ENCODE measurements at regions of chr12 and their contacts with region 1.

Region 1: GRCh38 chr12:106919910-106920544 is 35.7 kb upstream of the TMEM263 start:
- DNase-seq: peak; percentile 19
- ATAC-seq: no peak
- H3K4me3 Mint-ChIP-seq: no peak overlapping the region
- H3K27ac Mint-ChIP-seq: no peak overlapping the region
- H3K4me1 Mint-ChIP-seq: peaks cover 8% of the 10 kb centered on the region
- H3K27me3 Mint-ChIP-seq: peaks cover 6% of the 10 kb centered on the region
- CTCF ChIP-seq: peak; percentile 95

Region 2: DNA sequence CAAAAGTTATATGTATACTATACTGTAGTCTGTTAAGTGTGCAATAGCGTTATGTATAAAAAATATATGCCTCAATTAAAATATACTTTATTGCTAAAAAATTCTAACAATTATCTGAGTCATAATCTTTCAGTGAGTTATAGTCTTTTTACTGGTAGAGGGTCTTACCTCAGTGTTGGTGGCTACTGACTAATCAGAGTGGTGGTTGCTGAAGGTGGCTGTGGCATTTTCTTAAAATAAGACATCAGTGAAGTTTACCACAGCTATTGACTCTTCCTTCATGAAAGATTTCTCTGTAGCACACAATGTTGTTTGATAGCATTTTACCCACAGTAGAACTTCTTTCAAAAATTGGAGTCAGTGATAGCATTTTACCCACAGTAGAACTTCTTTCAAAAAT is 539.1 kb before region 1 on chr12:
- CTCF ChIA-PET with region 1: interaction called, 15 read pairs
- POLR2A ChIA-PET with region 1: no interaction called
- intact Hi-C with region 1: loop called (anchors 5 kb)
- DNase-seq: no peak
- ATAC-seq: no peak
- H3K4me3 Mint-ChIP-seq: no peak overlapping the region
- H3K27ac Mint-ChIP-seq: no peak overlapping the region
- H3K4me1 Mint-ChIP-seq: peaks cover 13% of the 10 kb centered on the region
- H3K27me3 Mint-ChIP-seq: no peaks in the 10 kb centered on the region
- CTCF ChIP-seq: no peak

Region 3: GRCh38 chr12:106386813-106387535 is 533.1 kb before region 1 on chr12:
- CTCF ChIA-PET with region 1: interaction called, 5 read pairs
- POLR2A ChIA-PET with region 1: no interaction called
- intact Hi-C with region 1: loop called (anchors 5 kb)
- DNase-seq: no peak
- ATAC-seq: no peak
- H3K4me3 Mint-ChIP-seq: no peak overlapping the region
- H3K27ac Mint-ChIP-seq: no peak overlapping the region
- H3K4me1 Mint-ChIP-seq: no peaks in the 10 kb centered on the region
- H3K27me3 Mint-ChIP-seq: no peaks in the 10 kb centered on the region
- CTCF ChIP-seq: no peak

Region 4: GRCh38 chr12:106682592-106683234 is 237.3 kb before region 1 on chr12:
- CTCF ChIA-PET with region 1: no interaction called
- POLR2A ChIA-PET with region 1: no interaction called
- intact Hi-C with region 1: loop called (anchors 5 kb)
- DNase-seq: no peak
- ATAC-seq: peak; percentile 42
- H3K4me3 Mint-ChIP-seq: no peak overlapping the region
- H3K27ac Mint-ChIP-seq: no peak overlapping the region
- H3K4me1 Mint-ChIP-seq: no peaks in the 10 kb centered on the region
- H3K27me3 Mint-ChIP-seq: no peaks in the 10 kb centered on the region
- CTCF ChIP-seq: no peak

Region 5: DNA sequence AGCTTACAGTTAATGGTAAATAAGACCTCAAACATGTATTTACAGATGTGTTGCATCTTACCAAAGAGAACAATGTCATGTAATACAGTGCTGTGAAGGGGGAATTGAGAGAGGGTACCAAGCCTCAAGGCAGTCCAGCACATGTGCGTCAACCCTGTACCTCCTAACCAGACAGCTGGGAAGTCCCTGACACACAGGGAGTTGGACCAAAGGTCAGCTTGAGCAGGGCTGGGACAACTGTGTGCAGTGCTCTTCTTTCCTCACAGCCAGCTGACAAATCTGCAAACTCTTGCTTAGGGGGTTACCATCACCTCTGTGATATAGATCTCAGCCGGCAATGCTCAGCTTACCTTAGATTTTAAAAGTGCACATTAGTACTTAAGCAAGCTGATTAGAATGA is 202.4 kb before region 1 on chr12:
- CTCF ChIA-PET with region 1: no interaction called
- POLR2A ChIA-PET with region 1: no interaction called
- intact Hi-C with region 1: no loop called
- DNase-seq: no peak
- ATAC-seq: no peak
- H3K4me3 Mint-ChIP-seq: no peak overlapping the region
- H3K27ac Mint-ChIP-seq: no peak overlapping the region
- H3K4me1 Mint-ChIP-seq: peaks cover 3% of the 10 kb centered on the region
- H3K27me3 Mint-ChIP-seq: no peaks in the 10 kb centered on the region
- CTCF ChIP-seq: no peak

Region 6: DNA sequence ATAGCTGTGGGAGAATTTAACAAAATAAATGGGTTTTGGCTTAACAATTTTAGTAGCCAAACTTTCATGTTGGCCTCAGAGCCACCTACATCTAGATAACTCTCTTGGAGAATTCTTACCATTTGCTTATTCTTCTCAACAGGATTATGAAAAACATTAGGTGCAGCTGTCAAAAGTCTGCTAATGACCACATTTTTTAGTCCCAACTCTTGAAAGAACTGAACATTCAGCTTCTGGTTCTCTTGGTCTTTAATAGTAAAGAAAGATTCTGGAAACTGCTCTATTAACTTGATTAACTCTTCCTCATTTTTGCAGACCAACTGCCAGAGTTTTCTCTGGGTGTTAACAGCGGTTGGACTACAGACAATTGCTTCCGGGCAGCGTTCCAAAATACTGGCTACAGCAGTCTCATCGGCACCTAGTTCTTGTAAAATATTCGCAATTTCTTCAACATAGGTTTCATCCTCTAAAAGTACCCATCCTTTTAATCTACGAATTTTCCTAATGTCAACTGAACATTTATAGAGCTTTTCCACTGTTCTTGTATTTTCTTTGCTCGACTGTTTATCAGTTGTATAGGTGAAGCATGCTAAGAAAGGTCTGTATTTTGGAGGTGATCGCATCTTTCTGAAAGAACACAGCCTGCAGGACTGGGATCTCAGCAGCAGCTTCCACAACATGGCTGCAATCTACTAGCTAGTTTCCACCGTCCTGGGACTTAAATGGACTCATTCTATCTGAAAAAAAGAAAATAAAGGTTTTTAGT is 58.2 kb after region 1 on chr12:
- CTCF ChIA-PET with region 1: no interaction called
- POLR2A ChIA-PET with region 1: no interaction called
- intact Hi-C with region 1: no loop called
- DNase-seq: no peak
- ATAC-seq: no peak
- H3K4me3 Mint-ChIP-seq: no peak overlapping the region
- H3K27ac Mint-ChIP-seq: no peak overlapping the region
- H3K4me1 Mint-ChIP-seq: peaks cover 27% of the 10 kb centered on the region
- H3K27me3 Mint-ChIP-seq: no peaks in the 10 kb centered on the region
- CTCF ChIP-seq: no peak

Region 7: GRCh38 chr12:107027636-107028053 is 107.6 kb after region 1 on chr12:
- CTCF ChIA-PET with region 1: no interaction called
- POLR2A ChIA-PET with region 1: no interaction called
- intact Hi-C with region 1: no loop called
- DNase-seq: no peak
- ATAC-seq: peak; percentile 84
- H3K4me3 Mint-ChIP-seq: no peak overlapping the region
- H3K27ac Mint-ChIP-seq: peak overlapping the region; percentile 81
- H3K4me1 Mint-ChIP-seq: peaks cover 26% of the 10 kb centered on the region
- H3K27me3 Mint-ChIP-seq: no peaks in the 10 kb centered on the region
- CTCF ChIP-seq: no peak

Region 8: GRCh38 chr12:107372229-107372658 is 452.2 kb after region 1 on chr12:
- CTCF ChIA-PET with region 1: no interaction called
- POLR2A ChIA-PET with region 1: no interaction called
- intact Hi-C with region 1: no loop called
- DNase-seq: peak; percentile 64
- ATAC-seq: peak; percentile 64
- H3K4me3 Mint-ChIP-seq: peak overlapping the region; percentile 24
- H3K27ac Mint-ChIP-seq: peak overlapping the region; percentile 98
- H3K4me1 Mint-ChIP-seq: peaks cover 73% of the 10 kb centered on the region
- H3K27me3 Mint-ChIP-seq: no peaks in the 10 kb centered on the region
- CTCF ChIP-seq: no peak

Measured in activated CD8-positive, alpha-beta T cell treated with anti-CD3 and anti-CD28 coated beads for 36 hours (primary cell).